ENCODE measurements at regions of chr6 and their contacts with region 1.

Region 1: DNA sequence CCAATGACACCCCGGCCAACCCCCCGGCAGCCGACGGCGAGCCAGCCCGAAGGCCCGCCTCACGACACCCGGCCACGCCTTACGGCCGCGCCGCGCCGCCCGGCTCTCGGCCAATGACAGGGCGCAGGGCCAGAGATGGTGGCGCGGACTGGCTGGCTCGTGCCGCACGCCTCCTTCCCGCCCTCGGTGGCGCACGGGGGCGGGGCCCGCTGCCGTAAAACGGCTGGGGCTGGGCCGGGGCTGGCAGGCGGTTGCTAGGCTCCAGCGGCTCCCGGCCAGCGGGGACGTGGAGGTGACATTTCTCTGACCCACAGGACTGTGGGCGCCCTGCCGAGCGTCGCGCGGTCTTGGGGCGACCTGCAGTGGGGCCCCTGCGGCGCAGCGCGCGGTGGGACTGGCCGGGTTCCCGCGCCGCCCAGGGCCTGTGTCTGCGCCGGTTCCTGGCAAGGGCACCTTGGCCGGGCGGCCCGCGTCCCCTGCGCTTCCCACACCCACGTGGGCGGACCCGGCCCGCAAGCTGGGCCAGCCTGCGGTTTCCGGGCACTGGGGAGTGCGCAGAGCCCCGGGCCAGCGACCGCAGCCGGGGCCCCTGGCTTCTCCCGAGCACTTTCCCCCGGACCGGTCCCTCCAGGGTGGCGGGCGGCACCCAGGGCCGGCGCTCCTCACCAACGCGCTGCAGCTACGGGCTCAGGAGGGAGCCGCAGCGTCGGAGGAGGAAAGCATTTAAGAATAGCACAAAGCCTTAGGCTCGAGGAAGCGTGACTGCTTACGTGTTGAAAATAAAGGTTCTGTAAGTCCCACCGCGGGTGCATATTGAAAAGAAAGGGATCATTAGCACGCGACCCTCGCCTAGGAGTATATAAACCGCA is at the start of gene MPC1:
- DNase-seq: peak; percentile 99
- H3K4me3 Mint-ChIP-seq: peak within 1 kb of the TSS; percentile 88
- H3K27ac Mint-ChIP-seq: peak within 1 kb of the TSS; percentile 75
- H3K4me1 Mint-ChIP-seq: peaks cover 13% of the 10 kb centered on the region
- H3K27me3 Mint-ChIP-seq: peaks cover 5% of the 10 kb centered on the region
- total RNA-seq, gene MPC1: 17.1 and 18.1 TPM in 2 replicates

Region 2: GRCh38 chr6:166253281-166253681 is 129.9 kb before region 1 on chr6:
- intact Hi-C with region 1: no loop called
- DNase-seq: peak; percentile 72
- H3K4me3 Mint-ChIP-seq: peak overlapping the region; percentile 81
- H3K27ac Mint-ChIP-seq: no peak overlapping the region
- H3K4me1 Mint-ChIP-seq: peaks cover 11% of the 10 kb centered on the region
- H3K27me3 Mint-ChIP-seq: peaks cover 59% of the 10 kb centered on the region

Region 3: GRCh38 chr6:166275714-166276166 is 107.4 kb before region 1 on chr6:
- intact Hi-C with region 1: loop called (anchors 1 kb)
- DNase-seq: peak; percentile 95
- H3K4me3 Mint-ChIP-seq: no peak overlapping the region
- H3K27ac Mint-ChIP-seq: no peak overlapping the region
- H3K4me1 Mint-ChIP-seq: peaks cover 3% of the 10 kb centered on the region
- H3K27me3 Mint-ChIP-seq: peaks cover 14% of the 10 kb centered on the region

Region 4: GRCh38 chr6:166333172-166333995 is 49.8 kb before region 1 on chr6:
- intact Hi-C with region 1: loop called (anchors 2 kb)
- DNase-seq: peak; percentile 85
- H3K4me3 Mint-ChIP-seq: peak overlapping the region; percentile 59
- H3K27ac Mint-ChIP-seq: peak overlapping the region; percentile 51
- H3K4me1 Mint-ChIP-seq: peaks cover 42% of the 10 kb centered on the region
- H3K27me3 Mint-ChIP-seq: no peaks in the 10 kb centered on the region

Region 5: GRCh38 chr6:166419286-166419685 is 36.1 kb after region 1 on chr6:
- intact Hi-C with region 1: loop called (anchors 5 kb)
- DNase-seq: peak; percentile 86
- H3K4me3 Mint-ChIP-seq: peak overlapping the region; percentile 9
- H3K27ac Mint-ChIP-seq: peak overlapping the region; percentile 50
- H3K4me1 Mint-ChIP-seq: peaks cover 61% of the 10 kb centered on the region
- H3K27me3 Mint-ChIP-seq: no peaks in the 10 kb centered on the region

Region 6: GRCh38 chr6:166956444-166957086 is 573.4 kb after region 1 on chr6 and contains the start of gene RNASET2:
- intact Hi-C with region 1: loop called (anchors 5 kb)
- DNase-seq: peak; percentile 100
- H3K4me3 Mint-ChIP-seq: peak within 1 kb of the TSS; percentile 95
- H3K27ac Mint-ChIP-seq: peak within 1 kb of the TSS; percentile 98
- H3K4me1 Mint-ChIP-seq: peaks cover 65% of the 10 kb centered on the region
- H3K27me3 Mint-ChIP-seq: no peaks in the 10 kb centered on the region
- total RNA-seq, gene RNASET2: 93.3 and 108 TPM in 2 replicates

Region 7: DNA sequence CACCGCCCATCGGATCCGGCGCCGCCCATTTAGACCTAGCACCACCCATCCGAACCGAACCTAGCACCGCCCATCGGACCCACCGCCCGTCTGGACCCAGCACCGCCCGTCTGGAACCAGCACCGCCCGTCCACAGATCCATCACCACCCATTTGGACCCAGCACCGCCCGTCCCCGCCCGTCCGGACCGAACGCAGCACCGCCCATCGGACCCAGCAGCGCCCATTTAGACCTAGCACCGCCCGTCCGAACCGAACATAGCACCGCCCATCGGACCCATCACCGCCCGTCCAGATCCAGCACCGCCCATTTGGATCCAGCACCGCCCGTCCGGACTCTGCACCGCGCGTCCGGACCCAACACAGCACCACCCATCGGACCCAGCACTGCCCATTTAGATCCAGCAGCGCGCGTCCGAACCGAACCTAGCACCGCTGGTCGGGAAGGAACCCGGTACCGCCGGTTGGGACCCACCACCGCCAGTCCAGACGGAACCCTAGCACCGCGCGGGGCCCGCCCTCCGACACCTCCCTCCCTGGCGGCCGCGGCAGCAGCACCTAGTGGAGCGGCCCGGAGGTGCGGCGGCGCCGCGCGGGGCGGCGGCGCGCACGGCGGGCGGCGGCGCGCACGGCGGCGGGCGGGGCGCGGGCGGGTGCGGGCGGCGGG is 1443.2 kb after region 1 on chr6:
- intact Hi-C with region 1: loop called (anchors 5 kb)
- DNase-seq: peak; percentile 91
- H3K4me3 Mint-ChIP-seq: peak overlapping the region; percentile 89
- H3K27ac Mint-ChIP-seq: peak overlapping the region; percentile 76
- H3K4me1 Mint-ChIP-seq: peaks cover 31% of the 10 kb centered on the region
- H3K27me3 Mint-ChIP-seq: peaks cover 70% of the 10 kb centered on the region